GM12878 (cell line): ENCODE measurements at regions of chr12 and their contacts with region 1.

Region 1: GRCh38 chr12:27260746-27261145 is 16.7 kb downstream of the STK38L start:
- DNase-seq: no peak
- ATAC-seq: peak; percentile 18
- H3K4me3 ChIP-seq: peak overlapping the region; percentile 29; the same call in 1 of the 2 replicates
- H3K27ac ChIP-seq: peak overlapping the region; percentile 39
- H3K4me1 ChIP-seq: peaks cover 20% of the 10 kb centered on the region
- H3K27me3 ChIP-seq: no peaks in the 10 kb centered on the region
- CTCF ChIP-seq: no peak
- EP300 ChIP-seq: no peak
- POLR2A ChIP-seq: no peak
- RAD21 ChIP-seq: no peak

Region 2: GRCh38 chr12:27112891-27113290 is 147.9 kb before region 1 on chr12:
- CTCF ChIA-PET with region 1: no interaction called
- POLR2A ChIA-PET with region 1: no interaction called
- RAD21 ChIA-PET with region 1: no interaction called
- SMC1A ChIA-PET with region 1: no interaction called
- in situ Hi-C with region 1: no loop called
- intact Hi-C with region 1: no loop called
- DNase-seq: no peak
- ATAC-seq: no peak
- H3K4me3 ChIP-seq: no peak overlapping the region
- H3K27ac ChIP-seq: no peak overlapping the region
- H3K4me1 ChIP-seq: no peaks in the 10 kb centered on the region
- H3K27me3 ChIP-seq: no peaks in the 10 kb centered on the region
- CTCF ChIP-seq: no peak
- EP300 ChIP-seq: no peak
- POLR2A ChIP-seq: no peak
- RAD21 ChIP-seq: no peak

Region 3: GRCh38 chr12:27272701-27273028 is 11.9 kb after region 1 on chr12:
- CTCF ChIA-PET with region 1: interaction called, 8 read pairs
- POLR2A ChIA-PET with region 1: interaction called, 94 read pairs
- RAD21 ChIA-PET with region 1: interaction called, 10 read pairs
- SMC1A ChIA-PET with region 1: interaction called, 491 read pairs
- in situ Hi-C with region 1: no loop called
- intact Hi-C with region 1: no loop called
- DNase-seq: no peak
- ATAC-seq: peak; percentile 69
- H3K4me3 ChIP-seq: no peak overlapping the region
- H3K27ac ChIP-seq: no peak overlapping the region
- H3K4me1 ChIP-seq: peaks cover 16% of the 10 kb centered on the region
- H3K27me3 ChIP-seq: no peaks in the 10 kb centered on the region
- CTCF ChIP-seq: no peak
- EP300 ChIP-seq: peak in 1 of 2 experiments; percentile 34; a peak in 1 of 4 replicates
- POLR2A ChIP-seq: no peak
- RAD21 ChIP-seq: no peak

Region 4: GRCh38 chr12:27277846-27278260 is 17.1 kb after region 1 on chr12:
- CTCF ChIA-PET with region 1: interaction called, 8 read pairs
- POLR2A ChIA-PET with region 1: interaction called, 94 read pairs
- RAD21 ChIA-PET with region 1: interaction called, 53 read pairs
- SMC1A ChIA-PET with region 1: interaction called, 491 read pairs
- in situ Hi-C with region 1: no loop called
- intact Hi-C with region 1: no loop called
- DNase-seq: peak; percentile 73
- ATAC-seq: peak; percentile 91
- H3K4me3 ChIP-seq: no peak overlapping the region
- H3K27ac ChIP-seq: peak overlapping the region; percentile 61; the same call in 1 of the 2 replicates
- H3K4me1 ChIP-seq: peaks cover 22% of the 10 kb centered on the region
- H3K27me3 ChIP-seq: no peaks in the 10 kb centered on the region
- CTCF ChIP-seq: no peak
- EP300 ChIP-seq: peak; percentile 64 to 71; a peak in 3 of 4 replicates
- POLR2A ChIP-seq: no peak
- RAD21 ChIP-seq: no peak